Ascending aorta (tissue), 2 donors: ENCODE measurements at regions of chr2 and their contacts with region 1.

Region 1: GRCh38 chr2:55617175-55618024 is at the start of gene PPP4R3B:
- DNase-seq: peak; percentile 98 to 100
- H3K4me3 ChIP-seq: peak within 1 kb of the TSS; percentile 93 to 98
- H3K27ac ChIP-seq: peak within 1 kb of the TSS; percentile 97 to 100
- H3K4me1 ChIP-seq: peaks cover 6 to 18% of the 10 kb centered on the region in 2 donors
- H3K27me3 ChIP-seq: no peaks in the 10 kb centered on the region
- CTCF ChIP-seq: peak in 2 of 3 experiments; percentile 44 to 53
- total RNA-seq, gene PPP4R3B: 18.2 TPM

Region 2: DNA sequence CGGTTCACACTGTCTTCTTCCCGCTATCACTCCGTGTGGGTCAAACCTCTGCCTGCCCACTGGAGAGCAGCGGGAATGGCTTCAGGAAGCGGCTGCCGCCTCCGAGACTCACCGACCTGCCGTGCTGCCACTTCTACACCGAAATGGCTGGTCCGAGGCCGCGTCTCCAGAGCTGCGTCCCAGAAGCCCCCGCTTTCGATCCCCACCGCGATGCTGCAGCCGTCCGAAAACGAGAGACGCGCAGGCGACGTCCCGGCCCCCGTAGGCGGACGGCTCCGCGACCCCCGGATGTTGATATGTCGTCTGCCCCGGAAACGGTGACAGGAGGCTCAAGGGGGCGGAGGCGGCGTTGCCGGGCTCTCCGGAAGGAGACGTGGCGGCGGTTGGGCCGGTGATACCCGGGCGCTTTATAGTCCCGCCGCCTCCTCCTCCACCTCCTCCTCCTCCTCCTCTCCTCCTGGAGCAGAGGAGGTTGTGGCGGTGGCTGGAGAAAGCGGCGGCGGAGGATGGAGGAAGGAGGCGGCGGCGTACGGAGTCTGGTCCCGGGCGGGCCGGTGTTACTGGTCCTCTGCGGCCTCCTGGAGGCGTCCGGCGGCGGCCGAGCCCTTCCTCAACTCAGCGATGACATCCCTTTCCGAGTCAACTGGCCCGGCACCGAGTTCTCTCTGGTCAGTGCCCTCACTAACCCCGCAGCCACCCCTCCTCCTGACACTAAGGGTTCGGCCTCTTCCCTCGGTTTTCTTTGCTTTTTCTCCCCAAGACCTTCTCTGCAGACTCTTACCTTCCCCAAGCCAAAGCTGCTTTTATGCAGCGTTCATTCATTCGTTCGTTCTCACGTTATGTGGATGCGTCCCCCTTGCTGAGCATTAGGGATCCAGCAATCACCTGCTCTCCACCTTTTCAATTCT is 1830.4 kb before region 1 on chr2 and contains the starts of genes ASB3 and ERLEC1:
- intact Hi-C with region 1: loop called (anchors 5 kb)
- DNase-seq: peak; percentile 49 to 92
- H3K4me3 ChIP-seq: peak within 1 kb of the TSS; percentile 69 to 83
- H3K27ac ChIP-seq: peak within 1 kb of the TSS; percentile 79 to 87
- H3K4me1 ChIP-seq: peaks cover 0 to 15% of the 10 kb centered on the region in 2 donors
- H3K27me3 ChIP-seq: no peaks in the 10 kb centered on the region
- CTCF ChIP-seq: peak in 1 of 3 experiments; percentile 36
- total RNA-seq, gene ASB3: 3.4 TPM
- total RNA-seq, gene ERLEC1: 150 TPM

Region 3: GRCh38 chr2:55232084-55232862 is 385.1 kb before region 1 on chr2 and contains the starts of genes CLHC1 and RPS27A:
- intact Hi-C with region 1: loop called (anchors 1 kb)
- DNase-seq: peak; percentile 50 to 92
- H3K4me3 ChIP-seq: peak within 1 kb of the TSS; percentile 69 to 86
- H3K27ac ChIP-seq: peak within 1 kb of the TSS; percentile 84 to 90
- H3K4me1 ChIP-seq: peaks cover 7 to 20% of the 10 kb centered on the region in 2 donors
- H3K27me3 ChIP-seq: no peaks in the 10 kb centered on the region
- CTCF ChIP-seq: no peak
- total RNA-seq, gene CLHC1: not detected
- total RNA-seq, gene RPS27A: 262 TPM

Region 4: GRCh38 chr2:55419679-55420438 is 197.5 kb before region 1 on chr2 and contains the start of gene CCDC88A:
- intact Hi-C with region 1: loop called (anchors 1 kb)
- DNase-seq: peak; percentile 84 to 97
- H3K4me3 ChIP-seq: peak within 1 kb of the TSS; percentile 83 to 92
- H3K27ac ChIP-seq: peak within 1 kb of the TSS; percentile 85 to 92
- H3K4me1 ChIP-seq: peaks cover 0 to 8% of the 10 kb centered on the region in 2 donors
- H3K27me3 ChIP-seq: no peaks in the 10 kb centered on the region
- CTCF ChIP-seq: peak; percentile 28 to 39 (median 29)
- total RNA-seq, gene CCDC88A: 39.2 TPM

Region 5: DNA sequence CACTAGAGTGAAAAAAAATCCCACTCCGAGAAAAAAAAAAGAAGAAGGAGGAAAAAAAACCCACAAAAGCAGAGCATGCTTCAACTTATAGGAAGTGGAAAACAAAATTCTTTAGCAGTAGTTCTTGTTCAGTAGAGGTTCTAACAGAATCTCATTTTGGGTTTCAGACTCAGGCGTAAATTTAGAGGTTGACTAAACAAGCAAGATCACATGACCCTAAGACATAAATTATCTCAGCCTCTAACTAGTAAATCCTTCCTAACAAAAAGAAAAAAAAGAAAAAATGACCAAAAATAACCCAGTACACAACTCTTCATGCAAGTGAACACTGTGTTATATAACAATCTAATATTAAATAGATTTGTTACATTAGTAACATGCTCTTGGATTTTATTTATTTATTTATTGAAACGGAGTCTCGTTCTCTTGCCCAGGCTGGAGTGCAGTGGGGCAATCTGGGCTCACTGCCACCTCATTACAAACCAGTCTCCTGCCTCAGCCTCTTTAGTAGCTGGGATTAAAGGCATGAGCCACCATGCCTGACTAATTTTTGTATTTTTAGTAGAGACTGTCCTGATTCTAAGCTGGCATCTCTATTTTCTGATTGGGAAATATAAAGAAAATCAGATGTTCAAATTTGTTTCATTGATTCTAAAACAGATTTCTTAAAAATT is 35.4 kb before region 1 on chr2:
- intact Hi-C with region 1: loop called (anchors 1 kb)
- DNase-seq: no peak
- H3K4me3 ChIP-seq: peak overlapping the region in 1 of 2 donors; percentile 2
- H3K27ac ChIP-seq: peak overlapping the region in 1 of 2 donors; percentile 43
- H3K4me1 ChIP-seq: peaks cover 0 to 11% of the 10 kb centered on the region in 2 donors
- H3K27me3 ChIP-seq: no peaks in the 10 kb centered on the region
- CTCF ChIP-seq: no peak

Region 6: DNA sequence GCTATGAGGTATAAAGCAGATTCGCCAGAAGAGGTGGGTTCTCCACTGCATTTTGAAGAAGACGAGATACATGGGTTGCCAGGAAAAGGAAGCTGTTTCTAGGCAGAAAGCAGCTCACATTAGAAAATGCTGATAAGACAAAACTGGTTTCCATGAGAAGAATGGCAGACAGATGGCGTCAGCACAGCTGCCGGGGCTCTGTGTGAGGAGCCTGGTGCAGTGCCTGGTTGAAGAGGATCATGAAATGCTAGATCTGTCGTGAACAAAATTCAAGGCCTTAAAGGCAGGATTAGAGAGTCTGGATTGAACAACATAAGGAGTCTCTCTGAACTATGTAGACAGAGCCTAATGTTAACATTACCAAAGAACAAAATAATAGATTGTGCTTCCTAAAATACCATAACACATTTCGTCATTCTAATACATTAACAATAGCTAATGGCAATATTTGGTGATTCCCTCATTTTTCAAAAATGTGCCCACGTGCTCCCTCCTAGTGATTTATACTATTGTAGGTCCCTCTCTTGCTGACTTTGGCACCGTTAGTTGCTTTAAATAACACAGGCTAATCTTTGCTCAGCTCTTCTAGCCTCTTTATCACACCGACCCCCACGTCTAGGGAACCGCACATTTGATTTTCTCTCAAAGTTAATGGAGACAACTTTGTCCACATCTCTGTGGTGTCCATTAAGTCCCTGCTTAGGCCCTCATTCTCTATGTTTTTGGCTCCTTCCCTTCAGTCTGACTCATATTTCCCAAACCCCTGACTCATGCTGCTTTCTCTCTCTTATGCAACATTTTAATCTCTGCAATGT is 267.9 kb after region 1 on chr2:
- intact Hi-C with region 1: loop called (anchors 10 kb)
- DNase-seq: peak in 1 of 2 donors; percentile 73
- H3K4me3 ChIP-seq: no peak overlapping the region
- H3K27ac ChIP-seq: peak overlapping the region; percentile 89 to 93
- H3K4me1 ChIP-seq: peaks cover 15 to 65% of the 10 kb centered on the region in 2 donors
- H3K27me3 ChIP-seq: no peaks in the 10 kb centered on the region
- CTCF ChIP-seq: no peak